ENCODE measurements at regions of chr5 and their contacts with region 1.

Region 1: GRCh38 chr5:150517272-150518152 is 9.6 kb downstream of the NDST1 start:
- DNase-seq: no peak
- H3K4me3 ChIP-seq: no peak overlapping the region
- H3K27ac ChIP-seq: peak overlapping the region; percentile 10 to 71 (median 50)
- H3K4me1 ChIP-seq: peaks cover 0 to 84% (median 69%) of the 10 kb centered on the region in 4 donors
- H3K27me3 ChIP-seq: no peaks in the 10 kb centered on the region
- CTCF ChIP-seq: no peak
- EP300 ChIP-seq: no peak
- POLR2A ChIP-seq: no peak

Region 2: DNA sequence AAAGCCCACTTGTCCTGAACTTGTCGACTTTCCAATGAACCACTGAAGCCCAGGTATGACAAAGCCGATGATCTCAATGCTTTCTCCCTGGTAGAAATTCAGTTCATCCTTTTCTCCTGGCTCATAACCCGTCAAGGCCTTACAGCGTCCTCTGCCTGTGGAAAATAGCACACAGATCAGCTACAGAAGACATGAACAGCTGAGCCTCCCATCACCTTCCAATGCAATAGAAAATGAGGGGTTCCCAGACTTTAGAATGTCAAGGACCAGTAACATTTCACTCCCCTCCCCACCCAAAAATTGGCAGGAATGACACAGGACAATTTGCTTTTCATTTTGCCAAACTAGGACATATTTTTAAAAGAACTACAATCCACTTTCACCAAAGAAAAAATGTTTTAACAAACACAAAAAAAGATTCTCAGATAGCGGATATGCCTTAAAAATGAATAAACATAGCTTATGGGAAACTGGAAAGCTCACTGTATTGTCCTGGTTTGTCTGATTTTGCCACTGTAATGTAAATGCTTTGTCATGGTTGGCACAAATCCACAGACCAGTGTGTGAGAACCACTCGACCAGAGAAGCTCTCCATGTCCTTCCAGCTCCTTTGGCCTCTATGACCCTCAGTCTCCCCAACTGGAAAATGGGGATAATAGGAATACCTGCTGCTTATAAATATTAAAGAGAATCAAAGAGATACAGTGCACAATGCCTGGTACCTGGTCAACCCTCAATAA is 1479.0 kb before region 1 on chr5:
- intact Hi-C with region 1: no loop called
- DNase-seq: no peak
- H3K4me3 ChIP-seq: no peak overlapping the region
- H3K27ac ChIP-seq: no peak overlapping the region
- H3K4me1 ChIP-seq: no peaks in the 10 kb centered on the region
- H3K27me3 ChIP-seq: no peaks in the 10 kb centered on the region
- CTCF ChIP-seq: no peak
- EP300 ChIP-seq: no peak
- POLR2A ChIP-seq: no peak

Region 3: GRCh38 chr5:150479416-150479815 is 38.1 kb before region 1 on chr5:
- intact Hi-C with region 1: loop called (anchors 5 kb)
- DNase-seq: no peak
- H3K4me3 ChIP-seq: no peak overlapping the region
- H3K27ac ChIP-seq: no peak overlapping the region
- H3K4me1 ChIP-seq: no peaks in the 10 kb centered on the region
- H3K27me3 ChIP-seq: no peaks in the 10 kb centered on the region
- CTCF ChIP-seq: no peak
- EP300 ChIP-seq: no peak
- POLR2A ChIP-seq: no peak

Region 4: GRCh38 chr5:150615141-150615699 is 97.7 kb after region 1 on chr5:
- intact Hi-C with region 1: no loop called
- DNase-seq: no peak
- H3K4me3 ChIP-seq: no peak overlapping the region
- H3K27ac ChIP-seq: peak overlapping the region; percentile 28 to 84 (median 58)
- H3K4me1 ChIP-seq: peaks cover 0 to 76% (median 63%) of the 10 kb centered on the region in 4 donors
- H3K27me3 ChIP-seq: no peaks in the 10 kb centered on the region
- CTCF ChIP-seq: no peak
- EP300 ChIP-seq: no peak
- POLR2A ChIP-seq: no peak

Region 5: DNA sequence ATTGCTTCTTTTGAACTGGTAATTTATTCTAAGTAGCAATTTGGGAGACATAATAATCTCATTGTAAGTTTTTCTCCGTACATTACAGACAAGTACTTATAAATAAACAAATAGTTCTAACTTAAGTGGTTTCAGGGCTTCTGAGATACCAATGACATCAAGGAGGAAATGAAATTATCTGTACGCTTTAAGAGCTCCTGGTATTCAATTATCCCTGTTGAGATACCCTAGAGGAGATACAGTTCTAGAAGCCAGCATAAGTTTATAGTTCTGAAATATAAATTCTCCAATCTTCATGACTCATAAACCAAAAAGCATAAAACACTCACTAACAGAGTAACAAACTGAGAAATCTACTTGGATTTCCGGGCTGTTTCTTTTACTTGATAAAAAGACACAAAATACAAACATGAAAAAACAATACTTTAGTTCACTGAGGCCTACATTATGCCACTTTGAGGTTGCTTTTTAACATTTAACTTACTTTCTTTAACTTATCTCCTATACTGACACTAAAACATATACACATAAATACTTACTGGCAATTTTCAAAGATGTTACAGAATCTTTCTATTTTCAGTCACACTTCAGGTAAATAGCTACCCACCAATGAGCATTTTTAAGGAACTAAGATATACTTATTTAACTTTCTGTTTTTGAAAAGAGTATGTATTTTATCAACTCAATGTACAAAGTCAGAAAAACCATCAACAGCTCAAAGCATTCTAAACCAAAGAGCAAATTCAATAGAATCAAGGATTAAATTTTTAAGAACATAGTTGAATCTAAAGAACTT is 233.8 kb after region 1 on chr5:
- intact Hi-C with region 1: no loop called
- DNase-seq: no peak
- H3K4me3 ChIP-seq: no peak overlapping the region
- H3K27ac ChIP-seq: peak overlapping the region in 1 of 4 donors; percentile 13
- H3K4me1 ChIP-seq: peaks cover 0 to 24% (median 14%) of the 10 kb centered on the region in 4 donors
- H3K27me3 ChIP-seq: no peaks in the 10 kb centered on the region
- CTCF ChIP-seq: no peak
- EP300 ChIP-seq: no peak
- POLR2A ChIP-seq: no peak

Region 6: DNA sequence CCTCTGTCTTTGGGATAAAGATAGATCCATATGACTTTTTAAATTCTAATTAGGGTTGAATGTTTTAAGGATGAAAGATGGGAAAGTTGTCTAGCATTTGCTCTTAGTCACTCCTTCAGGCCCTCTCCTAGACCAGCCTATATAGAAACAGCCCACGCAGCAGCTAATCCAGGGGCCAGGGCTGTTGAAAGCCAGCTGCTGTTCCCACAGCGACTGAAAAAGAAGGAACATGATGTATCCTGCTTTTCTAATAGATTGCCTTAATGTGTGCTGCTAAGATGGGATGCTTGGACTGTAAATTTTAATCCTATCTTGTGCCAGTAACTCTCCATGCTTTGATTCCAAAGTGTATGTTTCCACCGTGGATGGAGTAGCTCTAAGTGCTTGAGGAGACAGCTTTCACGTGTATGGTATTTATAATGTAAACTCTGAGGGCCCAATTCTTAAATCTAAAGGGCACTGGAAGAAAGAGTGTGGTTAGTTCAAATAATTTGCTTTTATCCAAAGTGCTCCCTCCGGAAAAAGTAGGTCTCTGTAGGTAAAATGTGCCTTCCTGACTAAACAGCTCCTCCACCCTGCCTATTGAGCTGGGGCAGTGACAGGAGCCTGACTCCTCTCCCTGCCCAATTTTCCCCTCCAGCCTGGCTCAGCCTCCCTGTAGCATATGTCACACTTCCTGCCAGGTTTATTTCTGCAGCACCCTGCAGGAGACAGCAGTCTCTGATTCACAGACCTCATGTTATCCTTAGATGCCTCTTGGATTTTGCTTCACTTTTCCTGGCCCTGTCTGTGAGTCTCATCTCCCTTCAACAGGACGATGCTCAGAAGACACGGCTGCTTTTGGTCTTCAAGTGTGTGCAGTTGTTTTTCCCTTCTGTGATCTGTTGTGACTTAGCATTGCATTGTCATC is 963.1 kb after region 1 on chr5:
- intact Hi-C with region 1: no loop called
- DNase-seq: no peak
- H3K4me3 ChIP-seq: no peak overlapping the region
- H3K27ac ChIP-seq: peak overlapping the region; percentile 53 to 64 (median 58)
- H3K4me1 ChIP-seq: peaks cover 0 to 19% (median 17%) of the 10 kb centered on the region in 4 donors
- H3K27me3 ChIP-seq: no peaks in the 10 kb centered on the region
- CTCF ChIP-seq: no peak
- EP300 ChIP-seq: peak in 1 of 4 donors; percentile 16
- POLR2A ChIP-seq: no peak

Measured in sigmoid colon (tissue), 7 donors.